SK-N-SH (cell line): ENCODE measurements at regions of chr5 and their contacts with region 1.

Region 1: GRCh38 chr5:157476702-157477408 is 16.8 kb downstream of the NIPAL4 start:
- DNase-seq: peak; percentile 85
- H3K4me3 ChIP-seq: no peak overlapping the region
- H3K27ac ChIP-seq: peak overlapping the region; percentile 22 to 66; a peak in 3 of 4 replicates
- H3K4me1 ChIP-seq: peaks cover 2 to 9% of the 10 kb centered on the region in 2 experiments; a peak in 2 of 4 replicates
- H3K27me3 ChIP-seq: no peaks in the 10 kb centered on the region
- CTCF ChIP-seq: peak; percentile 88
- EP300 ChIP-seq: no peak
- RAD21 ChIP-seq: peak; percentile 97

Region 2: DNA sequence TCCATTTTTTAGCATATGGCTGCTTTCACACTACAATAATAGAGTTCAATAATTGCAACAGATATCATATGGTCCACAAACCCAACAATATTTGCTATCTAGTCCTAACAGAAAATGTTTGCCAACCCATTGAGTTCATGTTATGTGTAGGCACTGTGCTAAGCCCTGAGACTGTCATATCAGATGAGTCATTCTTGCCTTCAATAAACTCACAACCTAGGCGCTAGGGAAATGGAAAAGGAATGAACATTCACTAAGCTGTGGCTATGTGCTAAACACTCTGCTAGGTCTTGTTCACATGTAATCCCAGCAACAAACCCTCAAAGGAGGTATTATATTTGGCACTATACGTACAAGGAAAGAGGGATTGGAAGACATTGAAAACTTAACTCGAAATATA is 505.4 kb before region 1 on chr5:
- CTCF ChIA-PET with region 1: no interaction called
- POLR2A ChIA-PET with region 1: no interaction called
- DNase-seq: no peak
- H3K4me3 ChIP-seq: no peak overlapping the region
- H3K27ac ChIP-seq: no peak overlapping the region
- H3K4me1 ChIP-seq: no peaks in the 10 kb centered on the region
- H3K27me3 ChIP-seq: no peaks in the 10 kb centered on the region
- CTCF ChIP-seq: no peak
- EP300 ChIP-seq: no peak
- RAD21 ChIP-seq: no peak

Region 3: GRCh38 chr5:157335534-157336422 is 141.1 kb before region 1 on chr5:
- CTCF ChIA-PET with region 1: interaction called, 102 read pairs
- POLR2A ChIA-PET with region 1: no interaction called
- DNase-seq: no peak
- H3K4me3 ChIP-seq: no peak overlapping the region
- H3K27ac ChIP-seq: no peak overlapping the region
- H3K4me1 ChIP-seq: no peaks in the 10 kb centered on the region; a peak in 1 of 4 replicates
- H3K27me3 ChIP-seq: no peaks in the 10 kb centered on the region
- CTCF ChIP-seq: no peak
- EP300 ChIP-seq: no peak
- RAD21 ChIP-seq: no peak

Region 4: DNA sequence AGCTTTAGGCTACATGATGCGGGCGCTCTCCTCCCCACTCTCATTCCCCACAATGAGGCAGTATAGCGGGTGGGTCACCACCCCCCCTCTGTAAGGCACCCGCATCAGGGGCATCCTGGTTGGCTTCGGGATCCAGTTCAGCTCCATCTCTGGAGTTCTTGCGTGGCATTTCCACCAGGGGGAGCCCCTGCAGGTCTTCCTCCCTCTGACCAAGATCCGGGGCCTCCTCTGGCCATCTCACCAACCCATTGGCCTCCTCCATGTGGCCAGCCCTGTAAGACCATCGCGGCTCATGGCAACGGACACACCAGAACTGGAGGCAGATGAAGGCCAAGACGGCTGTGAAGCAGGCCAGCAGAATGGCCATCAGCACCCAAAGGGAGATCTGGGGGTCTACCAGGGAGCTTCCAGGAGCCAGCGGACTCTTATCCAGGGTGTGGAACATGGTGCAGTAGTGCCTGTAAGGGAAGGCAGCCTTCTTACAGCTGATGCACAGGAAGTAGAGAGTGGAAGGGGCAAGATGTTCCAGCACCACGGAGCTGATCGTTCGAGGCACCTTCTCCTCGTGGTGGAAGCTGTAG is 133.9 kb before region 1 on chr5:
- CTCF ChIA-PET with region 1: interaction called, 21 read pairs
- POLR2A ChIA-PET with region 1: no interaction called
- DNase-seq: peak; percentile 62
- H3K4me3 ChIP-seq: no peak overlapping the region
- H3K27ac ChIP-seq: no peak overlapping the region
- H3K4me1 ChIP-seq: no peaks in the 10 kb centered on the region
- H3K27me3 ChIP-seq: no peaks in the 10 kb centered on the region
- CTCF ChIP-seq: peak; percentile 57
- EP300 ChIP-seq: no peak
- RAD21 ChIP-seq: peak; percentile 50

Region 5: DNA sequence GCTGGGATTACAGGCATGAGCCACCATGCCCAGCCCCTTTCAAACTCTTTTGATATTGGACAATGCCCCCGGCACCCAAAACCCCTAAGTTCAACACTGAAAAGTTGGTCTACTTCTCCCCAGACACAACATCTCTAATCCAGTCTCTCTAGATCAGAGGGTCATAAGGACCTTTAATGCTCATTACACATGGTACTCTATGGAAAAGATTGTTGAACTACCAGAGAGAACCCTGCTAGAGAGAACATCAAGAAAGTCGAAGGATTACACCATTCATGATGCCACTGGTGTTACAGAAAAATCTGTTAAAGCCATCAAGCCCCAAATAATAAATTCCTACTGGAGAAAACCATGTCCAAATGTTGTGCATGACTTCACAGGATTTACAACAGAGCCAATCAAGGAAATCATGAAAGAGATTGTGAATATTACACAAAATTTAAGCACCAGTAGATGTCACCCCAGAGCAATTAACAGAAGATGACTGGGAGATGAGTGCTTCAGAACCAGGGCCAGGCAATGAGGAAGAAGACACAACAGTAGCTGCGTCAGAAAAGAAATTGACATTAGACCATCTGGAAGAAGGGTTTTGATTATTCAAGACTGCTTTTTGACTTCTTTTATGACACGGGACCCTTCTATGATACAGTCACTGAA is 45.2 kb before region 1 on chr5:
- CTCF ChIA-PET with region 1: interaction called, 54 read pairs
- POLR2A ChIA-PET with region 1: no interaction called
- DNase-seq: no peak
- H3K4me3 ChIP-seq: no peak overlapping the region; a peak in 1 of 4 replicates
- H3K27ac ChIP-seq: no peak overlapping the region
- H3K4me1 ChIP-seq: no peaks in the 10 kb centered on the region
- H3K27me3 ChIP-seq: no peaks in the 10 kb centered on the region
- CTCF ChIP-seq: peak; percentile 62
- EP300 ChIP-seq: no peak
- RAD21 ChIP-seq: peak; percentile 78

Region 6: GRCh38 chr5:157449011-157449723 is 27.7 kb before region 1 on chr5:
- CTCF ChIA-PET with region 1: interaction called, 19 read pairs
- POLR2A ChIA-PET with region 1: no interaction called
- DNase-seq: peak; percentile 44
- H3K4me3 ChIP-seq: no peak overlapping the region
- H3K27ac ChIP-seq: peak overlapping the region in 1 of 2 experiments; percentile 56; a peak in 2 of 4 replicates
- H3K4me1 ChIP-seq: peaks cover 1 to 11% of the 10 kb centered on the region in 2 experiments; a peak in 2 of 4 replicates
- H3K27me3 ChIP-seq: no peaks in the 10 kb centered on the region
- CTCF ChIP-seq: no peak
- EP300 ChIP-seq: no peak
- RAD21 ChIP-seq: no peak

Region 7: DNA sequence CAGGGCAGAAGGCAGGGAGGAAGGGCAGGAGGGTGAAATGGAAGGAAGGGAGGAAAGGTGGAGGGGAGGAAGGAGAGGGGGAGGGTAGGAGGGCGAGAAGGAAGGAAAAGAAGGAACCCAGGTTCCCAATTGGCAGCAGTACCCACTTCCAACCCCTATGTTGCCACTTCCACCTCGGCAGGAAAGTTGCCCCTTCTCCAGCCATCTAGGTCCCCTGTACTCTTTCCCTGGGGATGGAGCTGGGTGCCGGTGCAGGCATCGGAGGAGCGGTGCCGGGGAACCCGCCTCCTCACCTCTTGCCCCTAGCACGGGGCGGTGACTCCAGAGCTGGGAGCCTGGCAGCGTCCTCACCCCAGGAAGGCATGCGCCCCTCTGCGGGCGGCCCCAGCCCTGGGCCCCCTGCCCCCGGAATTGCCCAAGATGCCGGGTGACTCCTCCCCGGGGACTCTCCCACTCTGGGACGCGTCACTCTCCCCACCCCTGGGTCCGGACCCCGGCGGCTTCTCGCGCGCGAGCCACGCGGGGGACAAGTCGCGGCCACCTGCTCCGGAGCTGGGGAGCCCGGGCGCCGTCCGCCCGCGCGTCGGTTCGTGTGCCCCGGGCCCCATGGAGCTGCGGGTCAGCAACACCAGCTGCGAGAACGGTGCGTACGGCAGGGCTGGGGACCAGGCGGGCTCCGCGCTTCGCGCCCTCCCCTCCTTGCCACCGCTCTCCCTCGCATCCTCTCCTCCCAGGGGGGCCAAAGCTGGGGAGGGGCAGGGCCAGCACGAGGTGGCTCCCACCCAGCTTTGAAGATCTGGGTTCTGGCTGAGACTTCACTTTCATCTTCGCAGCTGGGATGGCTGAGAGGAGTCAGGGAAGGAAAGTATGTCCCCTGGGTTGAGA is 16.9 kb before region 1 on chr5 and contains the start of gene NIPAL4:
- CTCF ChIA-PET with region 1: interaction called, 32 read pairs
- POLR2A ChIA-PET with region 1: no interaction called
- DNase-seq: peak; percentile 77
- H3K4me3 ChIP-seq: peak within 1 kb of the TSS; percentile 62 to 65
- H3K27ac ChIP-seq: no peak within 1 kb of the TSS
- H3K4me1 ChIP-seq: peaks cover 11 to 13% of the 10 kb centered on the region in 2 experiments; a peak in 3 of 4 replicates
- H3K27me3 ChIP-seq: no peaks in the 10 kb centered on the region
- CTCF ChIP-seq: no peak
- EP300 ChIP-seq: no peak
- RAD21 ChIP-seq: no peak
- polyA plus RNA-seq, gene NIPAL4: 2.3 and 2.6 TPM in 2 replicates

Region 8: GRCh38 chr5:157592594-157592993 is 115.7 kb after region 1 on chr5:
- CTCF ChIA-PET with region 1: no interaction called
- POLR2A ChIA-PET with region 1: no interaction called
- DNase-seq: no peak
- H3K4me3 ChIP-seq: no peak overlapping the region
- H3K27ac ChIP-seq: no peak overlapping the region
- H3K4me1 ChIP-seq: peaks cover 0 to 2% of the 10 kb centered on the region in 2 experiments; a peak in 1 of 4 replicates
- H3K27me3 ChIP-seq: no peaks in the 10 kb centered on the region
- CTCF ChIP-seq: no peak
- EP300 ChIP-seq: no peak
- RAD21 ChIP-seq: no peak

Region 9: DNA sequence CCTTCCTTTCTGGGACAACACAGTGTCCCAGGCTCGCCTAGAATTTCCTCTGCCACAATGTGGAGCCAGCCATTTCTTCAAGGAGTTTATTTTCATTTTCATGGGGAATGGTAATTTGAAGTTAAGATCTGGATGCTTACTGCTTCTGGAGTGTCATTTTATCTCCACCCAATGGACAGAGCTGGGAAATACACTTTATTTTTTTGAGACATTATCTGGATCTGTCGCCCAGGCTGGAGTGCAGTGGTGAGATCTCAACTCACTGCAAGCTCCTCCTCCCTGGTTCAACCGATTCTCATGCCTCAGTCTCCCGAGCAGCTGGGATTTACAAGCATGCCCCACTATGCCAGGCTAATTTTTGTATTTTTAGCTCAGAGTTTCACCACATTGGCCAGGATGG is 241.7 kb after region 1 on chr5:
- CTCF ChIA-PET with region 1: interaction called, 11 read pairs
- POLR2A ChIA-PET with region 1: no interaction called
- DNase-seq: peak; percentile 61
- H3K4me3 ChIP-seq: no peak overlapping the region; a peak in 1 of 4 replicates
- H3K27ac ChIP-seq: peak overlapping the region in 1 of 2 experiments; percentile 51; a peak in 1 of 4 replicates
- H3K4me1 ChIP-seq: no peaks in the 10 kb centered on the region; a peak in 1 of 4 replicates
- H3K27me3 ChIP-seq: no peaks in the 10 kb centered on the region
- CTCF ChIP-seq: peak; percentile 72
- EP300 ChIP-seq: no peak
- RAD21 ChIP-seq: peak; percentile 87